MCF 10A (cell line): ENCODE measurements at regions of chr3 and their contacts with region 1.

Region 1: GRCh38 chr3:14261229-14261628 is 82.6 kb downstream of the LSM3 start:
- DNase-seq: peak; percentile 80
- H3K4me3 Mint-ChIP-seq: no peak overlapping the region
- H3K27ac Mint-ChIP-seq: no peak overlapping the region
- H3K4me1 Mint-ChIP-seq: no peaks in the 10 kb centered on the region
- H3K27me3 Mint-ChIP-seq: peaks cover 29% of the 10 kb centered on the region
- CTCF ChIP-seq: peak; percentile 97

Region 2: DNA sequence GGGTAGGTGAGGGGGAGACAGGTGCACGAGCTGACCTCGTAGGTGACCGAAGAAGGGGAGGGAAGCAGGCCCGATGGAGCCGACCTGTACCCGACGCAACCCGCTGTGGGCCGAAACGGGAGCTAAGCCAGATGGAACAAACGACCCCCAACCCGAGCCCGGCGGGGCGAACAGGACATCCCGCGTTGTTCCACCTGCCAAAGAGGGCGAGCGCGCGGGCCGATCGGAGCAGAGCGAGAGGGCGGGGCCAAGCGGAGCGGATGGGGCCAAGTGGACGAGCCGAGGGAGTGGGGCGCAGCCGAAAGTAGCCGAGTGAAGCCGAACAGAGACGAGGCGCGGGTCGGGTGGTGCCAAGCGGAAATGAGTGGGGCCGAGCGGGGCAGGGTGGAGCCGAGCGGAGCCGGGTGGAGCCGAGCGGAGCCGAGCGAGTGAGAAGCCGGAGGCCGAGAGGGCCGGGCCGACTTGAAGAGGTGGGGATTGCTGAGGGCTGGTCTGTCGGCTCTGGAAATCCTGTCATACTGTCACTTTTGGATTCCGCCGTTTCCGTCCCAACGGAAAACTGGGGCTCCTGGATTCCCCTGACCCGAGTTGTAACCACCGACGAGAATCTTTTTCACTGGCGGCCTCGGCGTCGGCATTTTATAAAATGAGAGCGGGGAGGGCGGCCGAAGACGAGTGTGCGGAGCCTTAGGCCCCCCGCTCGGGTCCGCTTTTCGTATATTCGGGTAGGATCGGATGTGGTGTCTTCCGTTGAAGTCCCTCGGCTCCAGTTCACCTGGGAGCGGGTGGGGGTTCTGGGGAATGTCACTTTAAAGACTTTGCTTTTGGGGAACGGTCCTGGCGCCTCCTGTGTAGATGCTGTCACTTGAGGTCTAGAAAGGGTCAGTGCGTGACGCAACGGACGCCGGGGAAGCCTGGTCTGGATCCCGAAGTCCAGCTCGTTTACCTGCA is 365.8 kb before region 1 on chr3:
- CTCF ChIA-PET with region 1: interaction called, 5 read pairs
- POLR2A ChIA-PET with region 1: no interaction called
- intact Hi-C with region 1: loop called (anchors 1 kb)
- DNase-seq: peak; percentile 95
- H3K4me3 Mint-ChIP-seq: peak overlapping the region; percentile 81
- H3K27ac Mint-ChIP-seq: peak overlapping the region; percentile 88
- H3K4me1 Mint-ChIP-seq: peaks cover 4% of the 10 kb centered on the region
- H3K27me3 Mint-ChIP-seq: no peaks in the 10 kb centered on the region
- CTCF ChIP-seq: no peak

Region 3: DNA sequence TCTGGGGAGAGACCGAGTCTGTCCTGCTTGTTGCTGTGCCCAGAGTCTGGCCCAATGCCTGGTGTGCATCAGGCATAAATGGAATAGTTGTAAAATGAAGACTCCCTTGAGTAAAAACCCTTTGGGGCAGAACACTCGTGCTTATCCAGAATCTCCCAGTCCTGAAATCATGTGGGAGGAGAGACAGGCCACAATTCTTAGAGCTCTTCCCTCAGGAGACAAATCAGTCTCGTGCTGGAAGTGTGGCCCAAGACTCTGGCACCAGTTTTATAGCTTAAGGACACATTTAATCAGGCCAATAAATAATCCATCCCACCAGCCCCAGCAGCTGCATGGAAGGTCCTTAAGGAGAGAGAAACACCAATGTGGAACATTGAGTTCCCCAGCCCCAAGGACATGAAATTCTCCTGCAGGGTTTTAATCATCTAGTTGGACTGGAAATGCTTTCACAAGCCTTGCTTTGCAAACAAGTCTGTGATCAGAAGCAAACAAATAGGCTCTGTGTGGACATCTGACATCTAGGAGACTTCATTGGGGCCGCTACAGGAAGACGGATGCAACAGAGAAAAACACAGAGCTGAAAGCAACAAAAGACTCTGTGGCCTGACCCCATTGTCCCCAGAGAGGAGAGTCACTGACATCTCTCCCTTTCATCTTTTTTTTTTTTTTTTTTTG is 12.2 kb before region 1 on chr3:
- CTCF ChIA-PET with region 1: interaction called, 11 read pairs
- POLR2A ChIA-PET with region 1: no interaction called
- intact Hi-C with region 1: no loop called
- DNase-seq: no peak
- H3K4me3 Mint-ChIP-seq: no peak overlapping the region
- H3K27ac Mint-ChIP-seq: no peak overlapping the region
- H3K4me1 Mint-ChIP-seq: no peaks in the 10 kb centered on the region
- H3K27me3 Mint-ChIP-seq: peaks cover 10% of the 10 kb centered on the region
- CTCF ChIP-seq: no peak

Region 4: GRCh38 chr3:14369675-14370669 is 108.7 kb after region 1 on chr3:
- CTCF ChIA-PET with region 1: interaction called, 4 read pairs
- POLR2A ChIA-PET with region 1: no interaction called
- intact Hi-C with region 1: loop called (anchors 10 kb)
- DNase-seq: peak; percentile 37
- H3K4me3 Mint-ChIP-seq: no peak overlapping the region
- H3K27ac Mint-ChIP-seq: no peak overlapping the region
- H3K4me1 Mint-ChIP-seq: peaks cover 16% of the 10 kb centered on the region
- H3K27me3 Mint-ChIP-seq: peaks cover 18% of the 10 kb centered on the region
- CTCF ChIP-seq: peak; percentile 14

Region 5: DNA sequence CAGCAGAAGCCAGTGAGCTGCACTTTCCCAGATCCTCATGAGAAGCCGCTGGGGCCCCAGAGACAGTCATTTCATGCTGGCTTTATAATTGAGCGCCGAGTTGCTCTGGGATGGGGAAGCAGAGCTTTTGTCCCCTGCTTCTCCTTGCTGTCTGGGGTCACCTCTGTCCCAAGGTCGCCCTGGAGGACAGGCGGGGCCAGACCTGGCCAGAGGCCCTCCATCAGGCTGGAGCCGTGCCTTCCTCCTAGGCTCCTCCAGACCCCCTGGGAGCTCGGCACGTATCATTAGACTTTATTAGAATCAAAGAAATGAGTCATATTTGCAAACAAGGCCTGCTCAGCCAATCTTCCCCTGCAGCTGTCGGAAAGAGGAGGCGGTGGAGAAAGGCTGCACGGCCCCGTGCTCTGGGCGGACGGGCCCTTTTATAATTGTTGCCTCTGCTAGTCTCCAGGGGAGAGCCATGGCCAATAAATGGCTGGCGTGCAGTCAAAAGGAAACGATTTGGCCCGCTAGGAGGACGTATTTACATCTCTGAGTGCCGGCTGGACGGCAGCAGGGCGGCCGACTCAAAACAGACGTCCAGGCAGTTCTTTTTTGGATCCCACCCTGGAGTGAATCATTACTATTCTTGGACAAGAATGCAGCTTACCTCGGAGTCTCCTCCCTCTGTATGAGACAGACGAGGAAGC is 191.6 kb after region 1 on chr3:
- CTCF ChIA-PET with region 1: interaction called, 12 read pairs
- POLR2A ChIA-PET with region 1: no interaction called
- intact Hi-C with region 1: no loop called
- DNase-seq: peak; percentile 88
- H3K4me3 Mint-ChIP-seq: no peak overlapping the region
- H3K27ac Mint-ChIP-seq: peak overlapping the region; percentile 67
- H3K4me1 Mint-ChIP-seq: peaks cover 17% of the 10 kb centered on the region
- H3K27me3 Mint-ChIP-seq: no peaks in the 10 kb centered on the region
- CTCF ChIP-seq: no peak

Region 6: DNA sequence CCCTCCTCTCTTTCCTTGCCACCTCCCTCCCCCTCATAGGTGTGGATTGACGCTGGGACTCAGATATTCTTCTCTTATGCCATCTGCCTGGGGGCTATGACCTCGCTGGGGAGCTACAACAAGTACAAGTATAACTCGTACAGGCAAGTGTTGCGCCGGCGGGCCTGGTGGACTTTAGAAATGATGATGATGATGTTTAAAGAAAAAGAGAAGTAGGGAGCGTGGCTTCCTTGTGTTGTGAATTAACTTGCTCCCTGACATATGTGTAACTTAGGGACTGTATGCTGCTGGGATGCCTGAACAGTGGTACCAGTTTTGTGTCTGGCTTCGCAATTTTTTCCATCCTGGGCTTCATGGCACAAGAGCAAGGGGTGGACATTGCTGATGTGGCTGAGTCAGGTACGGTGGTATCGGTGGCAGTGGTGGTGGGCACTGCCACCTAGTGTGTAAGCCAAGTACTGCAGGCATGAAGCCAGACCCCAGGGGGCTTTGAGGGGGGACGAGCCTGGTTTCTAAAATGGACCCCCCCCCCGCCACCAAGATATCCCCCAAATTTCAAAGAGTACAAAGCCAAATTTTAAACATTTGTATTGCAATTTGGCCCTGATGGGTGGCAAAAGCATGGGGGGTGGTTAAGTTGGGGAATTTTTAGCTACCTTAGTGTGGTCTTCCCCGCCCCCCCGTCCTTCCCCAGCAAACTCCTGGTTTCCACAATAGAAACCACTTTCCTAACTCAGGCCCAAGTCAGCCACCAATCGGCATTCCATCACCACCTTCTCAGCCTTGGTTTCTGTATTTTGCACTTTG is 206.8 kb after region 1 on chr3:
- CTCF ChIA-PET with region 1: interaction called, 53 read pairs
- POLR2A ChIA-PET with region 1: no interaction called
- intact Hi-C with region 1: loop called (anchors 1 kb)
- DNase-seq: peak; percentile 34
- H3K4me3 Mint-ChIP-seq: no peak overlapping the region
- H3K27ac Mint-ChIP-seq: no peak overlapping the region
- H3K4me1 Mint-ChIP-seq: peaks cover 9% of the 10 kb centered on the region
- H3K27me3 Mint-ChIP-seq: no peaks in the 10 kb centered on the region
- CTCF ChIP-seq: peak; percentile 92